ENCODE measurements at regions of chrX and their contacts with region 1.

Region 1: GRCh38 chrX:40153335-40154249 is 55.8 kb upstream of the BCOR start:
- DNase-seq: no peak
- ATAC-seq: no peak
- H3K4me3 ChIP-seq: peak overlapping the region in 2 of 3 experiments; percentile 33 to 58; a peak in 2 of 6 replicates
- H3K27ac ChIP-seq: peak overlapping the region; percentile 95
- H3K4me1 ChIP-seq: peaks cover 43% of the 10 kb centered on the region
- H3K27me3 ChIP-seq: no peaks in the 10 kb centered on the region
- CTCF ChIP-seq: no peak
- EP300 ChIP-seq: no peak
- POLR2A ChIP-seq: no peak
- RAD21 ChIP-seq: no peak

Region 2: GRCh38 chrX:40083120-40083978 is 70.2 kb before region 1 on chrX:
- CTCF ChIA-PET with region 1: no interaction called
- POLR2A ChIA-PET with region 1: interaction called, 5 read pairs
- in situ Hi-C with region 1: no loop called
- intact Hi-C with region 1: loop called (anchors 5 kb)
- DNase-seq: no peak
- ATAC-seq: peak; percentile 58
- H3K4me3 ChIP-seq: peak overlapping the region; percentile 50 to 67 (median 52); a peak in 5 of 6 replicates
- H3K27ac ChIP-seq: peak overlapping the region; percentile 76
- H3K4me1 ChIP-seq: peaks cover 72% of the 10 kb centered on the region
- H3K27me3 ChIP-seq: no peaks in the 10 kb centered on the region
- CTCF ChIP-seq: no peak
- EP300 ChIP-seq: no peak
- POLR2A ChIP-seq: no peak
- RAD21 ChIP-seq: no peak

Region 3: GRCh38 chrX:40108959-40109287 is 44.7 kb before region 1 on chrX:
- CTCF ChIA-PET with region 1: no interaction called
- POLR2A ChIA-PET with region 1: interaction called, 54 read pairs
- in situ Hi-C with region 1: loop called (anchors 5 kb)
- intact Hi-C with region 1: no loop called
- DNase-seq: no peak
- ATAC-seq: peak; percentile 59
- H3K4me3 ChIP-seq: peak overlapping the region; percentile 53 to 76 (median 60); a peak in 5 of 6 replicates
- H3K27ac ChIP-seq: peak overlapping the region; percentile 97
- H3K4me1 ChIP-seq: peaks cover 21% of the 10 kb centered on the region
- H3K27me3 ChIP-seq: no peaks in the 10 kb centered on the region
- CTCF ChIP-seq: no peak
- EP300 ChIP-seq: no peak
- POLR2A ChIP-seq: no peak
- RAD21 ChIP-seq: no peak

Region 4: GRCh38 chrX:40169193-40170101 is 15.9 kb after region 1 on chrX:
- CTCF ChIA-PET with region 1: no interaction called
- POLR2A ChIA-PET with region 1: interaction called, 22 read pairs
- in situ Hi-C with region 1: no loop called
- intact Hi-C with region 1: no loop called
- DNase-seq: peak; percentile 70
- ATAC-seq: peak; percentile 59
- H3K4me3 ChIP-seq: peak overlapping the region; percentile 12 to 30 (median 28); a peak in 5 of 6 replicates
- H3K27ac ChIP-seq: peak overlapping the region; percentile 67
- H3K4me1 ChIP-seq: peaks cover 92% of the 10 kb centered on the region
- H3K27me3 ChIP-seq: no peaks in the 10 kb centered on the region
- CTCF ChIP-seq: peak; percentile 58
- EP300 ChIP-seq: no peak; a peak in 1 of 4 replicates
- POLR2A ChIP-seq: no peak
- RAD21 ChIP-seq: peak; percentile 38; the same call in 1 of the 2 replicates

Region 5: GRCh38 chrX:40199704-40200103 is 46.1 kb after region 1 on chrX:
- CTCF ChIA-PET with region 1: no interaction called
- POLR2A ChIA-PET with region 1: no interaction called
- in situ Hi-C with region 1: no loop called
- intact Hi-C with region 1: no loop called
- DNase-seq: no peak
- ATAC-seq: no peak
- H3K4me3 ChIP-seq: no peak overlapping the region
- H3K27ac ChIP-seq: no peak overlapping the region
- H3K4me1 ChIP-seq: no peaks in the 10 kb centered on the region
- H3K27me3 ChIP-seq: no peaks in the 10 kb centered on the region
- CTCF ChIP-seq: no peak
- EP300 ChIP-seq: no peak
- POLR2A ChIP-seq: no peak
- RAD21 ChIP-seq: no peak

Region 6: GRCh38 chrX:40266490-40267333 is 113.1 kb after region 1 on chrX:
- CTCF ChIA-PET with region 1: no interaction called
- POLR2A ChIA-PET with region 1: no interaction called
- in situ Hi-C with region 1: no loop called
- intact Hi-C with region 1: loop called (anchors 1 kb)
- DNase-seq: peak; percentile 23
- ATAC-seq: peak; percentile 92
- H3K4me3 ChIP-seq: peak overlapping the region; percentile 45 to 69 (median 60); a peak in 5 of 6 replicates
- H3K27ac ChIP-seq: no peak overlapping the region
- H3K4me1 ChIP-seq: peaks cover 29% of the 10 kb centered on the region
- H3K27me3 ChIP-seq: no peaks in the 10 kb centered on the region; a peak in 1 of 5 replicates
- CTCF ChIP-seq: peak; percentile 83
- EP300 ChIP-seq: no peak
- POLR2A ChIP-seq: no peak
- RAD21 ChIP-seq: peak; percentile 93